ENCODE measurements at regions of chr1 and their contacts with region 1.

Region 1: DNA sequence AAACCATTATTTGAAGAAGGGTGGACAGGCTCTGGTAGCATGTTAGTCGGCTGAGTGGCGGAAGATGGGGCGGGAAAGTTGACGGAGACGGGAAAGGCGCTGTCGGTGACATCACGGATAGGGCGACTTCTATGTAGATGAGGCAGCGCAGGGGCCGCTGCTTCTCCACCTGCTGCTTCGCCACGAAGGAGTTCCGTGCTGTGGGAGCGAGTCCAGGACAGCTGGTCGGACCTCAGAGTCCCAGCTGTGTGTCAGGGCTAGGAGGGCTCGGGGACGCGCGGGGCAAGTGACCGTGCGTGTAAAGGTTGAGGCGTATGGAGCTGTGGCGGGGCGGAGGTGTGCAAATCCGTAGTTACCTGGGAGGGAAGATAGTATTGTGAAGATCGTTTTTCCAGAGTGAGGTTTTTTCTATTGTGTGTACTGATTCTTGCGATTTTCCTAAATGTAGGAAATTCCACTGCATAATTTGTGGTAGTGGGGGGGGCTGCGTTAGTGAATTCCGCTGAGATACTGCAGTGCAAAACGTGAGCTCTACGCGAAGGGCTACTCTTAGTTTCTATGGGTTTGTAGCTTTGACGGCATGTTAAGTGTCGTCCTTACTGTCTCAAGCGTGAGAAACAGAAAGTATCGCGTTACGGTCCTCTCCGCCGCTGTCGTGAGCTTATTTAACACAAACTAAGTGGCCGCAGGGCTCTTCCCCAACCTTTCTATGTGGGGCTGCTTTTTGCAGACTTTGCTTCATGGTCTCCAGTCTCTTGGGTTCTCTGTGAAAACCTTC is 111.2 kb upstream of the NBPF11 start:
- DNase-seq: peak; percentile 99
- ATAC-seq: peak; percentile 82
- H3K4me3 ChIP-seq: peak overlapping the region; percentile 46 to 77
- H3K27ac ChIP-seq: peak overlapping the region; percentile 94
- H3K4me1 ChIP-seq: no peaks in the 10 kb centered on the region
- H3K27me3 ChIP-seq: no peaks in the 10 kb centered on the region
- CTCF ChIP-seq: no peak

Region 2: DNA sequence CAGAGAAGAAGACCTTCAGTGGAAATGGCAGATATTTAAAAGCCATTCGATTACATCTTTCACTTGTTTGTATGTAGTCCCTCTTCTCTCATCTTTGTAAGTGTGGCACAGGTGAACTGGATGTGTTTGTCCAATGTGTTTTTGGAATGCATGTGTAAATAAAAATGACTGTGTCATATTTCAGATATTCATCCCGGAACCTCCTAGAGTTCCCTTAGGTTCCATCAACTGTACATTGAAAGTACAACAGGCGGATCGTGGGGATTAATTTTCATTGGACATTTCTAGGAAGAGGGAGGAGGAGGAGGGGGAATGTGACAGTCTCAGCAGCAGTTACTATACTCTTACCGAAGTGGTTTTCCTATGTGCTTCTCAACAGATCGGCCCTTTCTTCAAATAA is 24.0 kb after region 1 on chr1:
- CTCF ChIA-PET with region 1: no interaction called
- POLR2A ChIA-PET with region 1: no interaction called
- in situ Hi-C with region 1: no loop called
- intact Hi-C with region 1: no loop called
- DNase-seq: no peak
- ATAC-seq: no peak
- H3K4me3 ChIP-seq: no peak overlapping the region
- H3K27ac ChIP-seq: no peak overlapping the region
- H3K4me1 ChIP-seq: no peaks in the 10 kb centered on the region
- H3K27me3 ChIP-seq: no peaks in the 10 kb centered on the region
- CTCF ChIP-seq: no peak

Region 3: GRCh38 chr1:148307583-148308190 is 44.4 kb after region 1 on chr1:
- CTCF ChIA-PET with region 1: no interaction called
- POLR2A ChIA-PET with region 1: interaction called, 11 read pairs
- in situ Hi-C with region 1: no loop called
- intact Hi-C with region 1: no loop called
- DNase-seq: no peak
- ATAC-seq: no peak
- H3K4me3 ChIP-seq: no peak overlapping the region
- H3K27ac ChIP-seq: no peak overlapping the region
- H3K4me1 ChIP-seq: peaks cover 9% of the 10 kb centered on the region
- H3K27me3 ChIP-seq: no peaks in the 10 kb centered on the region
- CTCF ChIP-seq: no peak

Region 4: GRCh38 chr1:148334339-148335130 is 71.2 kb after region 1 on chr1:
- CTCF ChIA-PET with region 1: interaction called, 3 read pairs
- POLR2A ChIA-PET with region 1: interaction called, 81 read pairs
- in situ Hi-C with region 1: no loop called
- intact Hi-C with region 1: loop called (anchors 5 kb)
- DNase-seq: peak; percentile 98
- ATAC-seq: peak; percentile 94
- H3K4me3 ChIP-seq: peak overlapping the region; percentile 68 to 85
- H3K27ac ChIP-seq: peak overlapping the region; percentile 99
- H3K4me1 ChIP-seq: peaks cover 5% of the 10 kb centered on the region
- H3K27me3 ChIP-seq: no peaks in the 10 kb centered on the region
- CTCF ChIP-seq: no peak

Region 5: GRCh38 chr1:148352470-148353261 is 89.3 kb after region 1 on chr1:
- CTCF ChIA-PET with region 1: no interaction called
- POLR2A ChIA-PET with region 1: no interaction called
- in situ Hi-C with region 1: no loop called
- intact Hi-C with region 1: no loop called
- DNase-seq: no peak
- ATAC-seq: no peak
- H3K4me3 ChIP-seq: no peak overlapping the region; a peak in 1 of 4 replicates
- H3K27ac ChIP-seq: no peak overlapping the region
- H3K4me1 ChIP-seq: peaks cover 10% of the 10 kb centered on the region
- H3K27me3 ChIP-seq: peaks cover 2% of the 10 kb centered on the region; the same call in 1 of the 2 replicates
- CTCF ChIP-seq: no peak

Measured in Panc1 (cell line).